GM10248 (cell line): ENCODE measurements at regions of chr21 and their contacts with region 1.

Region 1: GRCh38 chr21:44927587-44928461 is 7.1 kb upstream of the ITGB2 start:
- DNase-seq: peak; percentile 81
- CTCF ChIP-seq: no peak

Region 2: GRCh38 chr21:44792702-44793591 is 134.9 kb before region 1 on chr21:
- CTCF ChIA-PET with region 1: interaction called, 12 read pairs
- POLR2A ChIA-PET with region 1: no interaction called
- DNase-seq: peak; percentile 79
- CTCF ChIP-seq: peak; percentile 76

Region 3: GRCh38 chr21:44880762-44881585 is 46.9 kb before region 1 on chr21:
- CTCF ChIA-PET with region 1: interaction called, 104 read pairs
- POLR2A ChIA-PET with region 1: interaction called, 6 read pairs
- DNase-seq: no peak
- CTCF ChIP-seq: no peak

Region 4: DNA sequence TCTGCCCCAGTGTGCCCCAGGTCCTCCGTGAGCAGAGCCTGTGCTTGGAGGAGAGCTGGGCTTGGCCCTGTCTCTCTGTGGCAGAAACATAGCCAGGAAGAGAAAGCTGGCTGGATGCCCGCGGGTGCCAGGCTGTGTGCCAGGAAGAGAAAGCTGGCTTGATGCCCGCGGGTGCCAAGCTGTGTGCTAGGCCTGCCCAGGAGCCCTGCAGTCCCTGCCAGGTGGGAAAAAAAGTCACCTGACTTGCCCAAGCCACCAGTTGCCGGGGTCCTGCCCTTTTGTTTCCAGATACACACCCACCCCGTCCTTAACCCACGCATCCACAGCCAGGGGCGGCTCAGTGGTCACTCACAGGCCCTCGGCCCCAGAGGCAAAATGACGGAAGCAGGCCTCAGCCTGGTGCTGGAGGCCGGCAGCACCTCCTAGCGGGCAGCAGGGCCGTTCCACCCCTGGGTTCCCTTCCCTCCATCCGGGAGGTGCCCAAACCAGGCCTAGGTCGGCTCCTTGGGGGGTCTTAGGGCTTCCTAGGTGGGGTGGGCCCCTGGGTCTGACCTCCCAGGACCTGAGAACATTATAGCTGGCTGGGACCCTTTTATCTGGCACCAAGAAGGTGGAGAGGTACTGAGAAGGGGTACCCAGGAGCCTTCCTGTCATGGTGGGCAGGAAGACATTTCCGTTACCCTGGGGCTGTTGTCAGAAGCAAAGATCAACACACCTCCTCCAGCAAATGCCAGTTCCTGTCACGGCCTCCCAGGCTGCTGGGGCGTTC is 16.3 kb before region 1 on chr21:
- CTCF ChIA-PET with region 1: interaction called, 13 read pairs
- POLR2A ChIA-PET with region 1: interaction called, 4 read pairs
- DNase-seq: no peak
- CTCF ChIP-seq: peak; percentile 47

Region 5: DNA sequence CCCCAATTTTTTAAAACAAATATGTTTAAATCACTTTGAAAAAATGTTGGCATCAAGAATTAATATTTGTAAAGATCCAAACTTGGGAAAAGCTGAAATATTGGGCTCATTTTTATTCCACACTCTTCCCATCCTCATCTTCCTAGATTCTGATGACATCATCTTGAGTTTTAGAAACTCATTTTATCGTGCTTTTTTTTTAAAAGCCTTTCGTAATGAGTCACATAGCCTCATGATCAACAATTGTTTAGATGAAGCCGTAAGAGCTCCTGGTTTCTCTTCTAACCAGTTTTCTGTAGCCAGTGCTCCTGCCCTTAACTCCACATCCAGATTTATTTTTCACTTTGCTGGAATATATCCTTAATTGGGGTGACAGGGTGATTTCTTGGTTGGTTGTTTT is 281.2 kb after region 1 on chr21:
- CTCF ChIA-PET with region 1: no interaction called
- POLR2A ChIA-PET with region 1: no interaction called
- DNase-seq: no peak
- CTCF ChIP-seq: no peak

Region 6: GRCh38 chr21:46253610-46254124 is 1325.8 kb after region 1 on chr21:
- CTCF ChIA-PET with region 1: no interaction called
- POLR2A ChIA-PET with region 1: interaction called, 12 read pairs
- DNase-seq: peak; percentile 47
- CTCF ChIP-seq: no peak